H1 (cell line): ENCODE measurements at regions of chr13 and their contacts with region 1.

Region 1: DNA sequence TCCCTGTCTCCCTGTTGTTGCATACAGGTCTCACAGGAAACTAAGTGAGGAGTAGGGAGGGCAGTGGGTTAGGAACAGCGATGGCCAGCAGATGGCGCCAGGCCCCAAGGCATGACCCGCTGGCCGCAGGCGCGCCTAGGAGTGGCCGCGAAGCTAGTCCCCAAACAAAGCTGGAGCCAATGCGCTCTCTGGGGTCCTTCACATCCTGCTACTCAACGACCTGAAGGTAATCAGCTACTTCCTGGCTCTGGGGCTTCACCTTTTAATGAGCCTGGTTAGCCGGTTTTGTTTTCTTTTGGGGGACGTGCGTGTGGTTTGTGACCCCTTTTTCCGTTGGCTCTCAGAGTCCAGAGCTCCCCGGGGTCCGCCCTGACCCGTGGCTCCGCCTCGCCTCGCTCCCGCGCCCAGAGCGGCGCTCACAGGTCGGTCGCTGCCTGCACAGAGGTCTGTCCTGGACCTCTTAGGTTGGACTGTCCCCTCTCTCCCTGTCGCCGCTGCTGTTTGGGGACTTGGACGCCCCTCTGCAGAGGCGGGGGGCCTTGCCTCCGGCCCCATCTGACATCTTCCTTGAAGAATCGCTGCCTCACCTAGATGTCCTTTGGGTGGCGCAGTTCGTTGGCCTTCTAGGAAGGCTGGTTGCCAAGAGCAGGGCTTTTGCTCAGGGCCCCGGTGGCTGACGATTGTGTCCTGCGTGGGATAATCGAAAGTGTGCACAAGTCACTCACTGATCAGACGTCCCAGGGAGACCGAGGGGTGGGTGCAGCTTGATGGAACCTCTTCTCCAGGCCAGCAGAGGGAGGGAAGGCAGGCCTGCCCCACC is 62.1 kb upstream of the GTF3A start:
- DNase-seq: peak; percentile 87 to 95
- H3K4me3 ChIP-seq: peak overlapping the region; percentile 39 to 87 (median 78)
- H3K27ac ChIP-seq: no peak overlapping the region
- H3K4me1 ChIP-seq: peaks cover 2 to 8% (median 4%) of the 10 kb centered on the region in 4 experiments
- H3K27me3 ChIP-seq: peaks cover 0 to 8% (median 4%) of the 10 kb centered on the region in 4 experiments; a peak in 5 of 7 replicates
- CTCF ChIP-seq: peak; percentile 90 to 99 (median 98)
- EP300 ChIP-seq: no peak; a peak in 1 of 3 replicates
- POLR2A ChIP-seq: peak in 1 of 2 experiments; percentile 71; a peak in 1 of 3 replicates
- RAD21 ChIP-seq: peak; percentile 94 to 95

Region 2: GRCh38 chr13:26971990-26972887 is 390.0 kb before region 1 on chr13:
- CTCF ChIA-PET with region 1: interaction called, 16 read pairs
- POLR2A ChIA-PET with region 1: no interaction called
- DNase-seq: peak; percentile 15 to 70
- H3K4me3 ChIP-seq: no peak overlapping the region
- H3K27ac ChIP-seq: no peak overlapping the region
- H3K4me1 ChIP-seq: no peaks in the 10 kb centered on the region; a peak in 3 of 7 replicates
- H3K27me3 ChIP-seq: no peaks in the 10 kb centered on the region; a peak in 1 of 7 replicates
- CTCF ChIP-seq: peak; percentile 60 to 76 (median 74)
- EP300 ChIP-seq: no peak
- POLR2A ChIP-seq: no peak
- RAD21 ChIP-seq: peak; percentile 70 to 79

Region 3: DNA sequence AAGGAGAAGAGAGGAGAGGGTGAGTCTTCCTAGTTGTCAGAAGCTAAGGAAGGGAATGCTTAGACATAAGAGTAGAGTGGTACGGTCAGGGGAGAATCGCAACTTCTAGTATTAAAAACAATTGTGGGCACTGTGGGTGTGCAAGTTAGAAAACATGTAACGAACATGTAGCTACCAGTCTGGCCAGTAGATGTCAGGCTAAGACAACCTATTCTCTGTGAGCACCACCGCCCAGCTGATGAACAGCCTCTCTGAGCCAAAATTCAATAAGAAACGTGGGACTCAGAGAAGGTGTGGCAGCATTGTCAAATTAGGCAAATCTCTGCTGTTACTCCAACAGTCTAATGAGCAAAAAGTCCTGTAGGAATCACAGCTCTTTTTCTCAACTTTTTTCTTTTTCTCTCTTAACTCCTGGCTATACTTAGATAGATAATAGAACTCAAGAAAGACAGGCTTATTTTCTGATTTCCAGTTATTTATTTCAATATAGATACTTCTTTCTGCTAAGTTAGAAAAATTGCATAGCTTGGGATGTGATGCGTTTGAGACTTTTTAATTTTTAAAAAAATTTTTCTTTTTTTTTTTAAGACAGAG is 376.9 kb before region 1 on chr13:
- CTCF ChIA-PET with region 1: interaction called, 164 read pairs
- POLR2A ChIA-PET with region 1: interaction called, 4 read pairs
- DNase-seq: peak in 1 of 2 experiments; percentile 71
- H3K4me3 ChIP-seq: no peak overlapping the region
- H3K27ac ChIP-seq: no peak overlapping the region
- H3K4me1 ChIP-seq: no peaks in the 10 kb centered on the region
- H3K27me3 ChIP-seq: no peaks in the 10 kb centered on the region
- CTCF ChIP-seq: peak; percentile 21 to 87 (median 82)
- EP300 ChIP-seq: no peak
- POLR2A ChIP-seq: no peak
- RAD21 ChIP-seq: peak; percentile 98

Region 4: DNA sequence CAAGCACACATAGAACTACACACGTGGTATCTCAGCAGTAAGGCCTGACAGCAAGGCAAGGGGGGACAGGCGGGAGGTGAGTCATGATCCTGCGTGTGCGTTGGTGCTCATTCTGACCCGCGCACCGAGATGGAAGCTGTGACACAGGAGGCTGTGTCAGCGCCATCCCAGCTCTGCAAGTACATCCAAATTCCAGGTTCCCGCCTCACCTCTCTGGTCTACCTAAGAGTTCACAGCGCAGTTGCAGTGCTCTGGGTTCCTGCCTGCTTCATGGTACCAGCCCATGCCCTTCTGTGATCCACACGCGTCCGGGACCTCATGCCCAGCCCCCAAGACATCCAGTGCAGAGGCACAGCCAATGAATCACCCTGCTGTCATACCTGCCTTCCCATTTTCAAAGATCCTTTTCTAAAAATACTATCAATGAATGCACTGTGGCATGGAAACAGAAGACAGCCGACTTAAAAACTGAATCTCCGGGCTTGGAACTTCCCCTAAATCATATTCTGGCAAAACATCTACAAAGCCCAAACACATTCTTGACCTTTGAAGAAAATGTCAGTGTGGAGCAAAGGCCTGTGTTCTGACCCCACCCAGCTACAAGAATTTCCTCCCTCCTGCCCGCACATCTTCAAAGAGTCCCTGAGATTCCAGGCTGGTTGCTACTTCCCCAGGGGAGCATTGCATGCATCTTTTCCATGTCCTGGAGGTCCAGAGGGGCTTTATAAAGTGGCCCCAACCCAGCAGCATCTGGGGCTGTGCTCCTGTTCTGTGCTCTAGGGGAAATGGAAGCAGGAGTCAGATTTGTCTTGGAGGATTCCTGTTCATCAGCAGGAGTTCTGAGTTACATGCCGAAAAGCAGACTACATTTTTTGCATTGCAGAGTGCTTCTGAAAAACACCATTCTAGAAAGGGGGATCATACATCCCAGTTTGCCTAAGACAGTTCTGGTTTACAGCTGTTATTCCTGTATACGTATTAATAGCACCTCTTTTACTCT is 326.0 kb before region 1 on chr13:
- CTCF ChIA-PET with region 1: interaction called, 13 read pairs
- POLR2A ChIA-PET with region 1: no interaction called
- DNase-seq: no peak
- H3K4me3 ChIP-seq: no peak overlapping the region
- H3K27ac ChIP-seq: no peak overlapping the region
- H3K4me1 ChIP-seq: peaks cover 3 to 9% (median 5%) of the 10 kb centered on the region in 4 experiments
- H3K27me3 ChIP-seq: peaks cover 0 to 3% (median 0%) of the 10 kb centered on the region in 4 experiments; a peak in 5 of 7 replicates
- CTCF ChIP-seq: no peak
- EP300 ChIP-seq: no peak
- POLR2A ChIP-seq: no peak
- RAD21 ChIP-seq: no peak

Region 5: DNA sequence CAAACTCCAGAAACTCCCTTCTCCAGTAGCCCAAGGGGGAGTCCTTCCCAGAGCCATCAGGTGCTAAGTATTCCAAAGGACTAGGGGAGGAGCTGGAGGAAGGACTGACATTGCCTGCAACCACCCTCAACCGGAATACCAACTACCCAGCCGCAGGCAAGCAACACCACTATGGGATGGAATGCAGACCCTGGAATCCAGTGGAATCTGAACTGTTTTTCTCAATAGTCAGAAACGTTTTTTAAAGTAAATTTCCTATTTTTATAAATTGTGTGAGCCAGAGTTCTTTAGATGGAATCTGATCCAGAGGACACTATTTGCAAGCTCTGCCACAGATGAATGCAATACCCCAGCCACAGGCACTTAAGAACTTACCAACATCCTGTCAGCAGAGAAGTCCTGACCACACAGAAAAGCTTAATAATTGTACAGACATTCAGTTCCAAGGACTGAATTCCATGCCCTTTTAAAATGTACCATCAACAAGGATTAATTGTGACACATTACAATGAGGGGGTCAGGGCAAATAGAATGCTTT is 282.8 kb before region 1 on chr13:
- CTCF ChIA-PET with region 1: no interaction called
- POLR2A ChIA-PET with region 1: no interaction called
- DNase-seq: peak in 1 of 2 experiments; percentile 17
- H3K4me3 ChIP-seq: no peak overlapping the region
- H3K27ac ChIP-seq: no peak overlapping the region
- H3K4me1 ChIP-seq: peaks cover 0 to 3% (median 1%) of the 10 kb centered on the region in 4 experiments; a peak in 2 of 7 replicates
- H3K27me3 ChIP-seq: no peaks in the 10 kb centered on the region
- CTCF ChIP-seq: no peak
- EP300 ChIP-seq: no peak
- POLR2A ChIP-seq: no peak
- RAD21 ChIP-seq: no peak

Region 6: DNA sequence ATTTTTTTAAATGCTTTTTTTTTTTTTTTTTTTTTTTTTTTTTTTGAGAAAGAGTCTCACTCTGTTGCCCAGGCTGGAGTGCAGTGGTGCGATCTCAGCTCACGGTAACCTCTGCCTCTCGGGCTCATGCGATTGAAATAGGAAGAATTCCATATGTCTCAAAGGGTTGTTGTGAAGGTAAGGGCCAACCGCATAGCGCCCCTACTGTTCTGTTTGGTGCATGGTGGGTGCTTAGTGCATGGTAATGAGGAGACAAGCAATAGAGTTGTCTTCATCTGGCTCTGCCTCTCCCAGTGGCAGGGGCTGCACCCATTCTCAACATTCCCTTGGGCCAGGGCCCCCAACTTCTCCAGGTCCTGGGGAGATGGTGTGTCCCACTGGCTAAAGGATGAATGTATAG is 23.0 kb before region 1 on chr13:
- CTCF ChIA-PET with region 1: interaction called, 87 read pairs
- POLR2A ChIA-PET with region 1: interaction called, 3 read pairs
- DNase-seq: peak in 1 of 2 experiments; percentile 77
- H3K4me3 ChIP-seq: no peak overlapping the region; a peak in 1 of 8 replicates
- H3K27ac ChIP-seq: no peak overlapping the region
- H3K4me1 ChIP-seq: peaks cover 7 to 22% (median 11%) of the 10 kb centered on the region in 4 experiments
- H3K27me3 ChIP-seq: peaks cover 0 to 3% (median 1%) of the 10 kb centered on the region in 4 experiments; a peak in 2 of 7 replicates
- CTCF ChIP-seq: peak; percentile 64 to 81 (median 70)
- EP300 ChIP-seq: no peak
- POLR2A ChIP-seq: no peak
- RAD21 ChIP-seq: peak; percentile 53

Region 7: GRCh38 chr13:27424246-27425157 is 62.2 kb after region 1 on chr13 and contains the start of gene GTF3A:
- CTCF ChIA-PET with region 1: interaction called, 21 read pairs
- POLR2A ChIA-PET with region 1: interaction called, 3 read pairs
- DNase-seq: peak; percentile 46 to 87
- H3K4me3 ChIP-seq: peak within 1 kb of the TSS; percentile 68 to 78 (median 71)
- H3K27ac ChIP-seq: no peak within 1 kb of the TSS; the same call in 1 of the 2 replicates
- H3K4me1 ChIP-seq: peaks cover 0 to 17% (median 9%) of the 10 kb centered on the region in 4 experiments; a peak in 5 of 7 replicates
- H3K27me3 ChIP-seq: peaks cover 0 to 5% (median 3%) of the 10 kb centered on the region in 4 experiments; a peak in 2 of 7 replicates
- CTCF ChIP-seq: no peak
- EP300 ChIP-seq: no peak
- POLR2A ChIP-seq: peak in 1 of 2 experiments; percentile 49; a peak in 2 of 3 replicates
- RAD21 ChIP-seq: no peak
- total RNA-seq, gene GTF3A: 92.3 and 96.5 TPM in 2 replicates

Region 8: GRCh38 chr13:27977476-27978300 is 615.4 kb after region 1 on chr13:
- CTCF ChIA-PET with region 1: interaction called, 28 read pairs
- POLR2A ChIA-PET with region 1: no interaction called
- DNase-seq: peak in 1 of 2 experiments; percentile 72
- H3K4me3 ChIP-seq: peak overlapping the region in 1 of 4 experiments; percentile 28; a peak in 1 of 8 replicates
- H3K27ac ChIP-seq: no peak overlapping the region
- H3K4me1 ChIP-seq: peaks cover 0 to 13% (median 5%) of the 10 kb centered on the region in 4 experiments; a peak in 5 of 7 replicates
- H3K27me3 ChIP-seq: peaks cover 97 to 100% (median 100%) of the 10 kb centered on the region in 4 experiments
- CTCF ChIP-seq: no peak
- EP300 ChIP-seq: peak in 1 of 2 experiments; percentile 50; a peak in 1 of 3 replicates
- POLR2A ChIP-seq: no peak
- RAD21 ChIP-seq: no peak